ENCODE measurements at regions of chr1 and their contacts with region 1.

Region 1: DNA sequence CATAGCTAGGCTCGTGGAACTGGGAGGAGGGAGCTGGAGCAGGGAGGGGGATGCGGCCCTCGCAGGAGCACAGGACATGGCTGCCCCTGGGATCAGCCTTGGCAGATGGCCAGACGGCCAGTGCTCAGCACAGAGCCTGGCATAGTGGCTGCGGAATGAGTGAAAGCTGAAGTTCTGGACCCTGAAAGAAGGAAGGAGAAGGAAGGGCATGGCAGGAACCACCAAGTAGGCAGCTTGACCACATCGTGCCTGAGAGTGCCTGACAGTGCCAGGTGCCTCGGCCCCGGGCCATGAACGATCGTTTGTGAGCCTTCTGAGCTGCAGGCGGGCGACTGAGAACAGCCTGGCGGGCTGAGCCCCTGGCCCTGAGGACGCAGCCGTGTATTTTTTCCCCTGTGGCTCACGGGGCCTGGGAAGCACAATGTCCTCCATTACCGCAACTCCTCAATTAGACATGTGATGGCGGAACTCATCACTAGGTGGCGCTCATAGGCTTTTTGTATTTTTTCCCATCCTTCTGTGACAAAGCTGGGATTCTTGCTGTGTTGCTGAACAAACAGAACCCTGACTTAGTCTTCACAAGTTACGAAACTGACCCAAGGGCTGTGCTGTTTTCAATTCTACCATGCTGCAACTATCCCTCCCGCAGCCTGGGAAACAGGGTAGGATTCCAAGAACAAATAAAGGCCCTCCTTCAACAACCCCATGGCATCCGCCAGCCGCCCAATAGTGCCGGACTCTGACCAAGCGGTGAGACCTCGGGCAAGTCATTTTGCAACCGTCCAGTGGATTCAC is 29.9 kb upstream of the TMEM61 start:
- DNase-seq: peak; percentile 59 to 74
- H3K4me3 ChIP-seq: no peak overlapping the region
- H3K4me3 Mint-ChIP-seq: no peak overlapping the region
- H3K27ac Mint-ChIP-seq: peak overlapping the region; percentile 66
- H3K4me1 ChIP-seq: no peaks in the 10 kb centered on the region; the same call in 1 of the 2 replicates
- H3K4me1 Mint-ChIP-seq: peaks cover 18% of the 10 kb centered on the region
- H3K27me3 ChIP-seq: no peaks in the 10 kb centered on the region
- H3K27me3 Mint-ChIP-seq: no peaks in the 10 kb centered on the region
- CTCF ChIP-seq: peak; percentile 44 to 57

Region 2: DNA sequence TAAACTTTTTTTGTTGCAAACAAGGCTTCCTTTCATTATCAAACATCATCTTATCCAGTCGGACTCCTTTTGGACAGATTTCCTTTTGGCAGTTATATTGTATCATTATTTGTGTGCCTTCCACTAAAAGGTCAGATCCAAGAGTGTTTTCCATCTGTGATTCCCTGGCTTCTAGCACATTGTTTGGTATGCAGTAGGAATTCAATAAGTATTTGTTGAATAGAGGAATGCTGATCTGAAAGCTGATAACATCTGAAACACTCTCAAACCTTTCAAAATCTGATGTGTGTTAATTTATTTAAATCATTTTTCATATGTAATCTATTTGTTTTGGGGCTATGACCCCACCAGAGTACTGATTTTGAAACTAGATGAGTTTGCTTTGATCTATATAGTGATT is 1151.4 kb before region 1 on chr1:
- CTCF ChIA-PET with region 1: no interaction called
- POLR2A ChIA-PET with region 1: no interaction called
- intact Hi-C with region 1: no loop called
- DNase-seq: no peak
- H3K4me3 ChIP-seq: no peak overlapping the region
- H3K4me3 Mint-ChIP-seq: no peak overlapping the region
- H3K27ac Mint-ChIP-seq: no peak overlapping the region
- H3K4me1 ChIP-seq: no peaks in the 10 kb centered on the region
- H3K4me1 Mint-ChIP-seq: no peaks in the 10 kb centered on the region
- H3K27me3 ChIP-seq: no peaks in the 10 kb centered on the region
- H3K27me3 Mint-ChIP-seq: no peaks in the 10 kb centered on the region
- CTCF ChIP-seq: no peak

Region 3: DNA sequence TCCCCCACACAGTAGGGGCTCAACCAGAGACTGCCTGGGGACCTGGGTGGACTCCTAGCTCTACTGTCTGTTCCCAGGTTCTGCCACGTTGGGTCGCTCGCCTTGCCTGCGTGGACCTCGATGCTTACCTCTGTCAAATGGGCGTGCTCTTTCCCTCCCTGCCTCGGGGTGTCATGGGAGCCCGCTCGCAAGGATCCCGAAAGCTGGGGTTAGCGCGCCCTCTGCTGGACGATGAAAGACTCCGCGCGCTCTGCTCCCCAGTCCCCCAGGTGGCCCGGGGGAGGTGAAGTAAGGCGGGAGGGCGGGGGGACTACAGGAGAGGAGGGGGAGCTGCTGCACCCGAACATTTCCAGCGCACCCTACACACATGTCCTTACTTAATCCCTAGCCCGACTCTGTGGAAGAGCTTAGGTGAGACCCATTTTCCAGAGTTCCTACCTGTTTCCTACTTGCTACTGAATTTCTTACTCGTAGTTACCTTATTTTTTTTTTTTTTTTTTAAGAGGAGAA is 45.8 kb after region 1 on chr1:
- CTCF ChIA-PET with region 1: interaction called, 15 read pairs
- POLR2A ChIA-PET with region 1: interaction called, 3 read pairs
- intact Hi-C with region 1: loop called (anchors 1 kb)
- DNase-seq: peak; percentile 67 to 74
- H3K4me3 ChIP-seq: no peak overlapping the region
- H3K4me3 Mint-ChIP-seq: no peak overlapping the region
- H3K27ac Mint-ChIP-seq: no peak overlapping the region
- H3K4me1 ChIP-seq: no peaks in the 10 kb centered on the region
- H3K4me1 Mint-ChIP-seq: peaks cover 8% of the 10 kb centered on the region
- H3K27me3 ChIP-seq: no peaks in the 10 kb centered on the region
- H3K27me3 Mint-ChIP-seq: peaks cover 4% of the 10 kb centered on the region
- CTCF ChIP-seq: peak; percentile 60 to 66

Region 4: GRCh38 chr1:55012661-55013060 is 62.1 kb after region 1 on chr1:
- CTCF ChIA-PET with region 1: no interaction called
- POLR2A ChIA-PET with region 1: no interaction called
- intact Hi-C with region 1: no loop called
- DNase-seq: no peak
- H3K4me3 ChIP-seq: no peak overlapping the region
- H3K4me3 Mint-ChIP-seq: no peak overlapping the region
- H3K27ac Mint-ChIP-seq: no peak overlapping the region
- H3K4me1 ChIP-seq: no peaks in the 10 kb centered on the region
- H3K4me1 Mint-ChIP-seq: no peaks in the 10 kb centered on the region
- H3K27me3 ChIP-seq: no peaks in the 10 kb centered on the region
- H3K27me3 Mint-ChIP-seq: no peaks in the 10 kb centered on the region
- CTCF ChIP-seq: no peak

Region 5: GRCh38 chr1:55362558-55362957 is 412.0 kb after region 1 on chr1:
- CTCF ChIA-PET with region 1: no interaction called
- POLR2A ChIA-PET with region 1: no interaction called
- intact Hi-C with region 1: no loop called
- DNase-seq: no peak
- H3K4me3 ChIP-seq: no peak overlapping the region
- H3K4me3 Mint-ChIP-seq: no peak overlapping the region
- H3K27ac Mint-ChIP-seq: no peak overlapping the region
- H3K4me1 ChIP-seq: no peaks in the 10 kb centered on the region
- H3K4me1 Mint-ChIP-seq: no peaks in the 10 kb centered on the region
- H3K27me3 ChIP-seq: no peaks in the 10 kb centered on the region
- H3K27me3 Mint-ChIP-seq: no peaks in the 10 kb centered on the region
- CTCF ChIP-seq: no peak